ENCODE measurements at regions of chr6 and their contacts with region 1.

Region 1: DNA sequence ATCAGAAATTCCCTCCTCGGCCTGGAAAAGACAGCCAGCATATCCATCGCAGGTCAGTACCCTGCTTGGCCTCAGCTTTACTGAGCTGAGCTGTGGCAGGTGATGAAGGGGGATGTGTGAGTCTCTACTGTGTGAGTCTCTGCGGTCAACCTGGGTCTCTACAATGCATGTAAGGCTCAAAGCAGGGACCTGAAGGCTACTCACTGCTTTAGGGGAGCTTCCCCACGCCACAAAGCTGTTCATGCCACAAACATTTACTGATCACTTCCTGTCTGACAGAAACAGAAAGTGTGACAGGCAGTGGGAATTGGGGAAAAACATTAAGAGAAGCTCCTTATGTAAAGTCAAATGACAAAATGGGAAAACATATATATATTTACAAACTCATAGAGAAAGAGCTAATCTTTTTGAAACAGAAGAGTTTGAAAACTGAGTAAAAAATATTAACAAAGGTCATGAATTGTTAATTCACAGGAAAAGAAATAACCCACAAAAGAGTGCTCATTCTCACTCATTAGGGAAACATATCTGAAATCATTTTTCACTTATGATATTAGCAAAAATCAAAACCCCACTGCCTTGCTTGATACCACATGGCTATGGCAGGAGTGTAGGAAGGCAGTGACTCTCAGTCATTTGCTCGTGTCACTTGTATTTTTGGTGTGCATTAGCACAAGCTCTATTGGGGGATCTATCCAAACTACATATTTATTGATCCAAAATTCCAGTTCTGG is 5.8 kb downstream of the BTN3A3 start:
- DNase-seq: peak; percentile 73
- H3K4me3 Mint-ChIP-seq: no peak overlapping the region
- H3K27ac Mint-ChIP-seq: peak overlapping the region; percentile 79
- H3K4me1 Mint-ChIP-seq: peaks cover 60% of the 10 kb centered on the region
- H3K27me3 Mint-ChIP-seq: no peaks in the 10 kb centered on the region

Region 2: GRCh38 chr6:26175428-26176181 is 270.5 kb before region 1 on chr6:
- CTCF ChIA-PET with region 1: no interaction called
- POLR2A ChIA-PET with region 1: no interaction called
- intact Hi-C with region 1: loop called (anchors 10 kb)
- DNase-seq: peak; percentile 63
- H3K4me3 Mint-ChIP-seq: peak overlapping the region; percentile 24
- H3K27ac Mint-ChIP-seq: peak overlapping the region; percentile 43
- H3K4me1 Mint-ChIP-seq: peaks cover 31% of the 10 kb centered on the region
- H3K27me3 Mint-ChIP-seq: no peaks in the 10 kb centered on the region

Region 3: GRCh38 chr6:26604026-26604425 is 157.9 kb after region 1 on chr6:
- CTCF ChIA-PET with region 1: no interaction called
- POLR2A ChIA-PET with region 1: no interaction called
- intact Hi-C with region 1: no loop called
- DNase-seq: no peak
- H3K4me3 Mint-ChIP-seq: no peak overlapping the region
- H3K27ac Mint-ChIP-seq: no peak overlapping the region
- H3K4me1 Mint-ChIP-seq: peaks cover 45% of the 10 kb centered on the region
- H3K27me3 Mint-ChIP-seq: no peaks in the 10 kb centered on the region

Measured in activated CD4-positive, alpha-beta memory T cell treated with anti-CD3 and anti-CD28 coated beads for 36 hours (primary cell).